ENCODE measurements at regions of chr22 and their contacts with region 1.

Region 1: GRCh38 chr22:19629720-19630419 is 84.4 kb upstream of the SEPTIN5 start:
- DNase-seq: peak; percentile 80
- H3K4me3 ChIP-seq: no peak overlapping the region
- H3K27ac ChIP-seq: no peak overlapping the region
- H3K4me1 ChIP-seq: no peaks in the 10 kb centered on the region
- H3K27me3 ChIP-seq: peaks cover 0 to 5% of the 10 kb centered on the region in 2 experiments
- CTCF ChIP-seq: peak; percentile 91 to 92
- POLR2A ChIP-seq: no peak

Region 2: DNA sequence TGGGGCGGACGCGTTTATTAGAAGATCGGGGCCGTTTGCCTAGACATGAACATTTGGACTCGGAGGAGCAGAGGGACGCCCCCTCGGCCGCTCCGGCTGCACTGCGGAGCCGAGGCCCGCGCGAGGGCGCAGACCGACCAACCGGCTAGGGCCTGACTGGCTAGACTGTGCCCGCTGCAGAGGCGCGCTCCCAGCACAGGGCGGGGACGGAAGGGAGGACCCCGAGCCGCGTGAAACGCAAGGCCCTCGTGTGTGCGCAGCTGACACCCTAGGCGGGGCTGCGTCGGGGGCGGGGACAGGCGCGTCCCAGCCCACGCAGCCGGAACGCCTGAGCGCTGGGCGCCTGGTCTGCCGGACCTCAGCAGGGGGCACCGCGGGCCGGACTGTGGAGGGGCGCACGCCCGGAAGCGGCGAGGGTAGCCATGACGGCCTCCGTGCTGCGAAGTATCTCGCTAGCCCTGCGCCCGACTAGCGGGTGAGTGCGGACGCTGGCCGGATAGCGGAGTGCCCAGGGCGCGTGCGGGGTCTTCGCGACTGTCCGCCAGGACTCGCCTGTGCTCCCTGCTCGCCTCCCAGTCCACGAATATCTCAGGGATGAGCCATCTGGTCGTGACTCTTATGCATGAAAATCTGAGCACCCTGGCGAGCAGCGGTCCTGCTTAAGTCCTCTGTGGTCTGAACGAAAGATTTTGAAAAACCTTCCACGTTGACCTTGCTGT is 197.6 kb before region 1 on chr22 and contains the start of gene MRPL40:
- CTCF ChIA-PET with region 1: interaction called, 6 read pairs
- POLR2A ChIA-PET with region 1: no interaction called
- dilution Hi-C with region 1: no loop called
- intact Hi-C with region 1: loop called (anchors 1 kb)
- DNase-seq: peak; percentile 94
- H3K4me3 ChIP-seq: peak within 1 kb of the TSS; percentile 86 to 88 (median 86)
- H3K27ac ChIP-seq: peak within 1 kb of the TSS; percentile 75
- H3K4me1 ChIP-seq: peaks cover 17% of the 10 kb centered on the region
- H3K27me3 ChIP-seq: no peaks in the 10 kb centered on the region
- CTCF ChIP-seq: no peak
- POLR2A ChIP-seq: peak; percentile 95
- total RNA-seq, gene MRPL40: 27.4 and 30.6 TPM in 2 replicates

Region 3: DNA sequence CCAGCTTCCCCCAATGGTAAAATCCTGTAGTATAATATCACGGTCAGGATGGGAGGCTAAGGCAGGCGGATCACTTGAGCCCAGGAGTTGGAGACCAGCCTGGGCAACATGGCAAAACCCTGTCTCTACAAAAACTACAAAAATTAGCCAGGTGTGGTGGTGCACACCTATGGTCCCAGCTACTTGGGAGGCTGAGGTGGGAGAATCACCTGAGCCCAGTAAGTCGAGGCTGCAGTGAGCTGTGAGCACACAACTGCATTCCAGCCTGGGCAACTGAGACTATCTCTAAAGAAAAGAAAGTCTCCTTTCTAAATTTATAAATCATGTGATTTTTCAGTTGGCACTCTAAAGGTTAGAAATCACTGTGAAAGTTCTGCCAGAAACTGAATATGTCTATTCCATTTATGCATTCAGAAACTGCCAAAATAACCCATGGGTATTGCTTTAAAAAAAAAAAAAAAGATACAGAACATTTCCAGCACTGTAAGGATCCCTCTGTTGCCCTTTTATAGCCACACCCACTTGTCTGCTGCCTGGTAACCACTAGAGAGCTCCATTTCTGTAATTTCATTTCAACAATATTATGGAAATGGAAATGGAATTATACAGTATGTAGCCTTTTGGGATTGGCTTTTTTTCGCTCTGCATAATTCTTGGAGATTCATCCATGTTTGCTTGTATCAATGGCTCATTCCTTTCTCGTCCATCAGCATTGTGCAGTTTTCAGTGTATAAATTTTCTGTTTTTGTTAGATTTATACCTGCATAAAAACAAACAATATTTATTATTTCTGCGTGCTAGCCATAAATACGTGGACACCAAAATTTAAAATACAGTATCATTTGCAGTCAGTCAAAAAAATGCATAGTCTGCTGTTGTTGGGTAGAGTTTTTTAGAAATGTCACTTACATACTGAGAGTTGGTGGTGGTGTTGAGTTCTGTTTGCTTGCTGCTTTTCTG is 140.7 kb before region 1 on chr22:
- CTCF ChIA-PET with region 1: interaction called, 358 read pairs
- POLR2A ChIA-PET with region 1: no interaction called
- dilution Hi-C with region 1: no loop called
- intact Hi-C with region 1: no loop called
- DNase-seq: peak; percentile 25
- H3K4me3 ChIP-seq: no peak overlapping the region
- H3K27ac ChIP-seq: no peak overlapping the region
- H3K4me1 ChIP-seq: peaks cover 6% of the 10 kb centered on the region
- H3K27me3 ChIP-seq: no peaks in the 10 kb centered on the region
- CTCF ChIP-seq: no peak
- POLR2A ChIP-seq: no peak

Region 4: GRCh38 chr22:19523240-19524169 is 106.4 kb before region 1 on chr22:
- CTCF ChIA-PET with region 1: interaction called, 50 read pairs
- POLR2A ChIA-PET with region 1: interaction called, 8 read pairs
- dilution Hi-C with region 1: no loop called
- intact Hi-C with region 1: loop called (anchors 1 kb)
- DNase-seq: peak; percentile 60
- H3K4me3 ChIP-seq: peak overlapping the region; percentile 53 to 75 (median 61)
- H3K27ac ChIP-seq: peak overlapping the region; percentile 55
- H3K4me1 ChIP-seq: peaks cover 44% of the 10 kb centered on the region
- H3K27me3 ChIP-seq: no peaks in the 10 kb centered on the region
- CTCF ChIP-seq: no peak
- POLR2A ChIP-seq: peak; percentile 48

Region 5: DNA sequence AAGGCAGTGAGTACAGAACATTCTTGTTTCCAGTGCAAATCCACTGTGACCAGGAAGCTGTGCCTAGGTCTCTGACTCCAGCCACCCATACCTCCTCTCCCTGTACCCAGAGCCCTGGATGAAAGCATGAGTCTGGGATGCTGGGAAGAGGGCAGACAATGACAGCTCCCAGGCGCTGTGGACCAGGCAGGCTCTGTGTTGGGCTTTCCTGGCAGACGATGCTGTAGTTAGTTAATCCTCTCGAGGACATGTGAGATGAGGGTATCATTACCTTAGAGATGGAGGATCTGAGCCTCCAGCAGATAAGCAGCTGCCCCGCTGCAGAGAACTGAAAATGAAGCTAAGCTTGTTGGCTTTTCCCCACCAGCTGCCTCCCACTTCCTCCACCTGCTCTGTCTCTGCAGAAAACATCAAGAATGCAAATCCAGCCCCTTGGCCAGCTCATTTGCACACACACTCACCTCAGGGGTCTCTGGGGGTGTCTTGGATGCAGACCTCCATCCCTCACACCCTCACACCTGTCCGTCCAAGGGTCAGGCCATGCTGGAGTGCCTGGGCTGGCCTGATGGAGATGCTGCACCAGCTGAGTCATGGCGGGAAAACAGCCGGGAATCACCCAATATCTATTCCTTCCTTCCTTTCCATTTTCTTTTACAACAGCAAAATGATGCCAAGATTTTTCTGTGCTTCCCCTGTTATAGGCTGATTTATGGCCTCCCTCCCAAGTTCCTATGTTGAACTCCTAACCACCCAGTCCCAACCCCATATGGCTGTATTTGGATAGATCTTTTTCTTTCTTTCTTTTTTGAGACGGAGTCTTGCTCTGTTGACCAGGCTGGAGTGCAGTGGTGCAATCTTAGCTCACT is 10.5 kb before region 1 on chr22:
- CTCF ChIA-PET with region 1: interaction called, 12 read pairs
- POLR2A ChIA-PET with region 1: no interaction called
- dilution Hi-C with region 1: no loop called
- intact Hi-C with region 1: no loop called
- DNase-seq: peak; percentile 33
- H3K4me3 ChIP-seq: no peak overlapping the region
- H3K27ac ChIP-seq: no peak overlapping the region
- H3K4me1 ChIP-seq: peaks cover 20% of the 10 kb centered on the region
- H3K27me3 ChIP-seq: peaks cover 0 to 3% of the 10 kb centered on the region in 2 experiments
- CTCF ChIP-seq: no peak
- POLR2A ChIP-seq: no peak

Region 6: GRCh38 chr22:19661156-19661555 is 31.3 kb after region 1 on chr22:
- CTCF ChIA-PET with region 1: no interaction called
- POLR2A ChIA-PET with region 1: no interaction called
- dilution Hi-C with region 1: no loop called
- intact Hi-C with region 1: no loop called
- DNase-seq: no peak
- H3K4me3 ChIP-seq: no peak overlapping the region
- H3K27ac ChIP-seq: no peak overlapping the region
- H3K4me1 ChIP-seq: no peaks in the 10 kb centered on the region
- H3K27me3 ChIP-seq: peaks cover 0 to 5% of the 10 kb centered on the region in 2 experiments
- CTCF ChIP-seq: no peak
- POLR2A ChIP-seq: no peak

Measured in endothelial cell of umbilical vein (primary cell).